ENCODE measurements at regions of chr16 and their contacts with region 1.

Region 1: DNA sequence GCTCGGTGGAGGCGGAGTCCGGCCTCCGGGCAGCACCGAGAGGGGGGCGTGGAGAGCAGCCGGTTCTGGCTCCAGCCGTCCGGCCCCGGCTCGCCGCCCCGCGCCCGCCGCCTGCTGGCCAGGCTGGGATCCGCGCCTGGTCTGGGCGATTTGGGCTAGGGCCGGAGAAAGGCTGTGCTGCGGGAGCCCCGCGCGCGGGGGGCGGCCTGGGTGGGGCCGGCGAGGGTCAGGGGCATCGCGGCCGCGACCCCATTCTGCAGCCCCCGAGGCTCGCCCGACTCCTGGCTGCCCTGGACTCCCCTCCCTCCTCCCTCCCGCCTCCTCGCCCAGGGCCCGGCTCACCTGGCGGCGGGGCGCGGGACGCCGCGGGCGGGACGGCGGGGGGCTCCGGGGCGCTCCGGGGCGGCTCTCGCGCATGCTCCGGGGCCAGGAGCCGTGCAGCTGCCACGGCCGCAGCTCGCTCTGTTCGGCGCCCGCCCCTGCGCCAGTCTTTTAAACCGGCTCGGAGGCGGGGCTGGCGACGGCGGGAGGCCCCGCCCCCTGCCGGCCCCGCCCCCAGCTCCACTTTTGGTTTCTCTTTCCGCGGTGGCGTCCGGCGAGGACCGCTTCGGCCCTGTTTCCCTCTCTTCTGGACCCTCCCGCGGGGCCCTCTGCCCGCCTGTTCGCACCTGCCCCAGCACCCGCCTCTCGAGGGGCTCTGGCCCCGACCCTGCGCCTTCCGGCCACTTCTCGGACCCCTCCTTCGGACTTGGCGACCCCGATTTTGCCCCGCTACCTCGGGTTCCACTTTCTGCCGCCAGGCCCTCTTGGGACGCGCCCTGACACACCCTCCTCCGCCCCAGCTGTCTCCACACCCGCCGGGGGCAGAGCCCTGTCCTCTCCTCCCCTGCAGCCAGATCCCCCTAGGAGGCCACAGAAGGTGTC is at the start of gene SOCS1:
- DNase-seq: no peak
- H3K4me3 ChIP-seq: peak within 1 kb of the TSS; percentile 72
- H3K27me3 ChIP-seq: no peaks in the 10 kb centered on the region
- CTCF ChIP-seq: peak; percentile 26; the same call in 1 of the 2 replicates
- polyA plus RNA-seq, gene SOCS1: 1.9 and 2.6 TPM in 2 replicates

Region 2: GRCh38 chr16:10954903-10955302 is 301.1 kb before region 1 on chr16:
- CTCF ChIA-PET with region 1: interaction called, 17 read pairs
- POLR2A ChIA-PET with region 1: interaction called, 5 read pairs
- DNase-seq: no peak
- H3K4me3 ChIP-seq: no peak overlapping the region
- H3K27me3 ChIP-seq: no peaks in the 10 kb centered on the region
- CTCF ChIP-seq: no peak

Region 3: GRCh38 chr16:10964039-10964890 is 291.7 kb before region 1 on chr16:
- CTCF ChIA-PET with region 1: interaction called, 209 read pairs
- POLR2A ChIA-PET with region 1: interaction called, 3 read pairs
- DNase-seq: no peak
- H3K4me3 ChIP-seq: no peak overlapping the region
- H3K27me3 ChIP-seq: no peaks in the 10 kb centered on the region
- CTCF ChIP-seq: peak; percentile 96

Region 4: GRCh38 chr16:10976634-10977033 is 279.4 kb before region 1 on chr16:
- CTCF ChIA-PET with region 1: interaction called, 209 read pairs
- POLR2A ChIA-PET with region 1: interaction called, 5 read pairs
- DNase-seq: no peak
- H3K4me3 ChIP-seq: no peak overlapping the region
- H3K27me3 ChIP-seq: no peaks in the 10 kb centered on the region
- CTCF ChIP-seq: no peak

Region 5: DNA sequence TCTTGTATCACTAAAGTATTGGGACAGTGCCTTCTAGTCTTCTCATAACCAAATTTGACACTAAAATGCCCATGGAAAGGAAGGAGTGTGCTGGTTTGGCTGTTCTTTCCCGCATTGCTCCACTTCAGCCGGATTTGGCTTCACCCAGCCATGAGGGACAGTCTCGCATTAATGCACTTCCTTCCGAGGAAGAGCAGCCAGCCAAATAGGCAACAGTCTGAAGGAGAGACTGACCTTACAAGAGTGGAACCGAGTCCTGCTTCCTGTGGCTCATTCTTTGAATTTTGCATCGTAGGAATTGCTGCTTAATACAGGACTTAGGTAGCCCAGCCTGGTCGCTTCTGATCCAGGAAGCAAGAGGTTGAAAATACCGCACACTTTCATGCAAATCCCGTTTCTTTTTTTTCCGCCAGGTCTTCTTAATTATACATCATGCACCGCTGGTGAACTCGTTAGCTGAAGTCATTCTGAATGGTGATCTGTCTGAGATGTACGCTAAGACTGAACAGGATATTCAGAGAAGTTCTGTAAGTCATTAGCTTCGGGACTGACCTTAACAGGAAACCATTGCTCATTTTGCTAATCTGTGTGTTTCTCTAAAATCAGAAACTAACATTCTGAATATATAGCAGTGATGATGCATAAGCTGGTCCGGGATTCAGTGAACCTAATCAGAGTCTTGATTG is 273.4 kb before region 1 on chr16:
- CTCF ChIA-PET with region 1: interaction called, 18 read pairs
- POLR2A ChIA-PET with region 1: no interaction called
- DNase-seq: no peak
- H3K4me3 ChIP-seq: no peak overlapping the region
- H3K27me3 ChIP-seq: no peaks in the 10 kb centered on the region
- CTCF ChIP-seq: no peak

Region 6: GRCh38 chr16:11133344-11133943 is 122.6 kb before region 1 on chr16:
- CTCF ChIA-PET with region 1: interaction called, 11 read pairs
- POLR2A ChIA-PET with region 1: no interaction called
- DNase-seq: peak; percentile 80
- H3K4me3 ChIP-seq: no peak overlapping the region
- H3K27me3 ChIP-seq: no peaks in the 10 kb centered on the region
- CTCF ChIP-seq: no peak

Region 7: DNA sequence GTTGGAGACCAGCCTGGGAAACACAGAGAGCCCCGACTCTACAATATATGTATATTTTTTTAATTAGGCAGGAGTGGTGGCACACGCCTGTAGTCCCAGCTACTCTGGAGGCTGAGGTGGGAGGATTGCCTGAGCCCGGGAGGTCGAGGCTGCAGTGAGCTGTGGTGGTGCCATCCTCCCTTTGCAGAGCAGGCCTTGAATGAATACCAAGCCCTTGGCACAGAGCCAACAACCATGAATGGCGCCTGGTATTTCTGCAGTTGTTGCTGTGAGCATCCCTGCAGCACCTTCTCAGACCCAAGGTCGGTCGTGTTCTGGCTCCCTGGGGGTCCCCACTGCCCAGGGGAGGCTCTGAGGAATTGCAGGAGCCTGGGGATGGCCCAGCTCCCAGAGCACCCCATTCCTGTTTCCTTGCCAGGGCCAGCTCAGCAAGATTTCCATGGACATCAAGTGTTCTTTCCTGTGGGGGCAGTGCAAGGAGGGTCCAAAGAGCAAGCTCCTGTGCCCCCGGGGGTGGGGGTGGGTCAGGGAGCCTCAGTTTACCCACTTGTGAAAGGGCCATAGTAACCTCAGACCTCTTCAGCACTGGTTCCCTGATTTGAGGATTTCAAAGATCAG is 63.6 kb after region 1 on chr16:
- CTCF ChIA-PET with region 1: no interaction called
- POLR2A ChIA-PET with region 1: no interaction called
- DNase-seq: no peak
- H3K4me3 ChIP-seq: no peak overlapping the region
- H3K27me3 ChIP-seq: no peaks in the 10 kb centered on the region
- CTCF ChIP-seq: no peak

Region 8: GRCh38 chr16:11356573-11357331 is 100.8 kb after region 1 on chr16:
- CTCF ChIA-PET with region 1: interaction called, 112 read pairs
- POLR2A ChIA-PET with region 1: interaction called, 3 read pairs
- DNase-seq: no peak
- H3K4me3 ChIP-seq: no peak overlapping the region
- H3K27me3 ChIP-seq: no peaks in the 10 kb centered on the region
- CTCF ChIP-seq: peak; percentile 76

Measured in BJ (cell line).